Prostate gland (tissue), 2 donors: ENCODE measurements at regions of chr17 and their contacts with region 1.

Region 1: DNA sequence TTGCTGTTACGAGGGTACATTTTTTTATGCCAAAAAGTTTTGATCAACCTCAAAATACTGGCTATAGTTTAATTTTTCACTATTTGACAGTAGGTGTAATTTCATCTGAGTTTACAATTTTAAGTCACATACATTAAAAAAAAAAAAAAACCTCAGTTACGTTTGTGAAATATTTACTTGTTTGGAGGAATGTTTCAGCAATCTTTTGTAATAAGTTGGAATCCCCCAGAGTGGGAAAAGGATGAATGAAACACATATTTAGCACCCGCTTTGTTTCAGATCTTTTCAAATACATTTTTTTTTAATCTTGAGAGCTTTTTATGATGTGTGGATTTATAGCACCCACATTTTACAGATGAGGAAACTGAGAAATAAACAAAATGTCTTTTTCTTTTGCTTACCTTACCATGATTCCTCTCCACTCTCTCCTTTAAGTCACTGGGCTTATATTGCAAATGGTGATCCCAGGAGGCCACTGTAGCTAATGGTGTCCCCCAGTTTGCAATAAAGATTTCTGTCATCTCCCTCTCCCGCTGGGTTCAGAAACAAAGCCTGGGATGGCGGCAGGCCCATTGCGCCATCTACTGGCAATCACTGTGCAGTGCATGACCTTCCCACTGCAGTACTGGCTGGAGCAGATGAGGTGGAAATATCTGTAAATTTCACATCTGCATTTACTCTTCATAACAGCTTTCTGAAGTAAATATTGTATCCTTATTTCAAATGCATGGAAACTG is 27.7 kb downstream of the TBC1D3B start:
- DNase-seq: peak; percentile 61
- H3K4me3 ChIP-seq: no peak overlapping the region
- H3K27ac ChIP-seq: no peak overlapping the region
- H3K4me1 ChIP-seq: no peaks in the 10 kb centered on the region
- H3K27me3 ChIP-seq: no peaks in the 10 kb centered on the region
- CTCF ChIP-seq: peak; percentile 94 to 100 (median 96)
- POLR2A ChIP-seq: no peak

Region 2: GRCh38 chr17:35969558-35970380 is 179.0 kb before region 1 on chr17:
- intact Hi-C with region 1: loop called (anchors 10 kb)
- DNase-seq: peak; percentile 77
- H3K4me3 ChIP-seq: no peak overlapping the region
- H3K27ac ChIP-seq: no peak overlapping the region
- H3K4me1 ChIP-seq: peaks cover 2% of the 10 kb centered on the region
- H3K27me3 ChIP-seq: no peaks in the 10 kb centered on the region
- CTCF ChIP-seq: peak; percentile 55 to 90 (median 82)
- POLR2A ChIP-seq: no peak

Region 3: DNA sequence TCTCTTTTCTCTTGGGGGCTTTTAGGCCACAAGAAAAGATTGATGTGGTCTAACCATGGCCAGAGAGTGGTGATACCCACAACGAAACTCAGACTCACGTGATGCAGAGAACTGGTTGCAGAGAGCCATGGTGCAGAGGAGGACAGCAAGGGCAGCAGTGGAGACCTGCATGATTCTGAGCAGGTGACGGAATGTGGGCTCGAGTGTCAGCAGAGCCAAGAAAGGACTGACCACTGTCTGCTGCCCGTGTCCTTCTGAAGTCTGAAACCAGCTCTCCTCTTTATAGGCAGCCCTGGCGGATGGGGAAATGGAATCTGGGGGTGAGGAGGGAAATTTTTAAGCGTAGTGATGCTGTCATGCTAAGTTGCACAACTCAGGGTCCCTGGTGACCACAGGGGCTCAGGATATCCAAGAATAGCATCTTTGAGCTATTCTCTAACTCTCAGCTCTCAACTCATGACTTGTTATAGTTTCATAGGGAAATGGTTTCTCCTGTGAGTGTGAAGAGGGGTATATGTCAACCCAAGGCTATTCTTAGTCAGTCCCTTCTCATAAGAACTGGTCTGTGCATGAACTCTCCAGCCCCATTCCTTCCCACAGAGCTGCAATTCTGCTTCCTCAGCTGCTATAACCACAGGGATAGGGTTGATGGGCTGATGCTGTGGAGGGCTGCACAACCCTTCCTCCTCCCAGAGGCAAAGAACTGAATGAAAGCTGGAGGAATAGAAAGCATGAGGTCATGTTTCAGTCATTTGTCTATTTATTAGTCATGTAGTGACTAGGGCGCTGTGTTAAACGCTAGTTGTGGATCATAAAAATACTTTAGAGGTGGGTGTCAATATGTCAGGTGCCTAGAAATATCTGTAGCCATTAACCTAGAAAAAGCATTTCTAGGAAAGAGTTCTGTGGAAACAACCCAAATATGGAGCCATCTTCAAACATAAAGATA is 58.6 kb before region 1 on chr17 and contains the start of gene CCL3:
- intact Hi-C with region 1: no loop called
- DNase-seq: no peak
- H3K4me3 ChIP-seq: no peak within 1 kb of the TSS
- H3K27ac ChIP-seq: no peak within 1 kb of the TSS
- H3K4me1 ChIP-seq: no peaks in the 10 kb centered on the region
- H3K27me3 ChIP-seq: no peaks in the 10 kb centered on the region
- CTCF ChIP-seq: no peak
- POLR2A ChIP-seq: no peak
- total RNA-seq, gene CCL3: not detected

Region 4: DNA sequence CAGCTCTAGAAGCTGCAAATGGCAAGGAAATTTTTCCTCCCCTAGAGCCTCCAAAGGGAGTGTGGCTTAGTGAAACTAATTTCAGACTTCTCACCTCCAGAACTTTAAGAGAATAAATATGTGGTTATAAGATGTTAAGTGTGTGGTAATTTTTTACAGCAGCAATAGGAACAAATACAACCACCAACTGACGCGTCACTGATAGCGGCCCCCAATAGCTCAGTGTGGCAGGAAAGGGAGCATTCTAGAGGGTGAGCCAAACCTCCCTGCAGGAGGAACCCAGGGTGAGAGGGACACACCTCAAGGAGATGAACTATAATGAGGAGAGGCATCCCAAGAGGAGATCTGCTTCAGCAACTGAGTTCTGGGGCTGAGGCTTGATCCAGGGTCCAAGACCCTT is 41.1 kb before region 1 on chr17:
- intact Hi-C with region 1: no loop called
- DNase-seq: no peak
- H3K4me3 ChIP-seq: no peak overlapping the region
- H3K27ac ChIP-seq: no peak overlapping the region
- H3K4me1 ChIP-seq: no peaks in the 10 kb centered on the region
- H3K27me3 ChIP-seq: no peaks in the 10 kb centered on the region
- CTCF ChIP-seq: no peak
- POLR2A ChIP-seq: no peak

Region 5: GRCh38 chr17:36496018-36496789 is 347.5 kb after region 1 on chr17:
- intact Hi-C with region 1: no loop called
- DNase-seq: no peak
- H3K4me3 ChIP-seq: no peak overlapping the region
- H3K27ac ChIP-seq: no peak overlapping the region
- H3K4me1 ChIP-seq: no peaks in the 10 kb centered on the region
- H3K27me3 ChIP-seq: no peaks in the 10 kb centered on the region
- CTCF ChIP-seq: no peak
- POLR2A ChIP-seq: no peak

Region 6: GRCh38 chr17:37494971-37495370 is 1346.2 kb after region 1 on chr17:
- intact Hi-C with region 1: no loop called
- DNase-seq: no peak
- H3K4me3 ChIP-seq: no peak overlapping the region
- H3K27ac ChIP-seq: no peak overlapping the region
- H3K4me1 ChIP-seq: no peaks in the 10 kb centered on the region
- H3K27me3 ChIP-seq: no peaks in the 10 kb centered on the region
- CTCF ChIP-seq: no peak
- POLR2A ChIP-seq: no peak